Activated CD4-positive, alpha-beta T cell treated with anti-CD3 and anti-CD28 coated beads, Interleukin-2, amount 10 ng/mL, durations not matched to agents 24 days and 14 days (primary cell): ENCODE measurements at regions of chr19 and their contacts with region 1.

Region 1: DNA sequence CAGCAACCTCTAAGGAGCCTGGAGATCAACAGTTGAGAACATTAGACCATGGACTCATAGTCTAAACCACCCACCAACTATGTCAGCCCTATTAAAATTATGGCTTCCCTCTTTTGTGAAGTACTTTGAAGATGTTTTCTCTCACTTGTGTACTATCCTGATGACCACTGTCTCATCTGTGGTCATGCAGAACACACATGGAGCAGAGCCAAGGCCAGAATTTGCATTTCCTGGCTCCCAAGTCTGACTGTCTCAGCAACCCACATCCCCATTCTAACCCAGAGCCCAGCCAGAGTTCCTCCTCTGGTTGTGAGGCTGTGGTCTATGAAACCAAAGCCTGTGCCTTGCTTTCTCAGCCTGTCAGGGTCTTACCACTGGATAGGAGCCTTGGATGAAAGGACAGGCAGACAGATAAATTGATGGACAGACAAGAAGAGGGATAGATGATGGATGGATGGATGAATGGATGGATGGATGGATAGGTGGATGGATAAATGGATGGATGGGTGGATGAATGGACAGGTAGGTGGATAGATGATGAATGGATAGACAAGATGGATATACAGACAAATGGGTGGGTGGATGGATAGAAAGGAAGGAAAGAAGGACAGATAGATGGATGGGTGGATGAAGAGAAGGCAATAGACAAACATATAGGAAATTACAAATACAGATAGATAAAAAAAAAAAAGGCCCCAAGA is 35.4 kb downstream of the ZNF557 start:
- DNase-seq: no peak
- H3K4me3 Mint-ChIP-seq: no peak overlapping the region
- H3K27ac Mint-ChIP-seq: no peak overlapping the region
- H3K4me1 Mint-ChIP-seq: peaks cover 9% of the 10 kb centered on the region
- H3K27me3 Mint-ChIP-seq: no peaks in the 10 kb centered on the region

Region 2: DNA sequence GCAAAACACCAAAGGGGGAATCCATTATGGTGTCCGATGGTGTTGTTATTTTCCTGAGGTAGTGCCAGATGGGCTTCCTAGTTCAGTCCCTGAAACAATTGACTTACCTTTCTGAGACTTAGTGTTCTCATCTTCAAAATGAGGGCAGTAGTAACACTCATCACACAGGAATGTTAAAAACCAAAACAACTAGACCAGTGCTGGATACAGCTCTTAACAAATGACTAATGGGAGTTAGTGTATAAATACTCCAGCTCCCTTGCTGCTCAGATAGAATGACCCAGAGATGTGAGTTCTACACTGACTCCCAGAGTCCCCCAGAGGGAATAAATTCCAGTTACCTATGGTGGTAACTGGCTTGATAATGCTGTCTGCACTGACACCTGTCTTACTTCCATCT is 133.5 kb before region 1 on chr19:
- intact Hi-C with region 1: no loop called
- DNase-seq: no peak
- H3K4me3 Mint-ChIP-seq: no peak overlapping the region
- H3K27ac Mint-ChIP-seq: no peak overlapping the region
- H3K4me1 Mint-ChIP-seq: no peaks in the 10 kb centered on the region
- H3K27me3 Mint-ChIP-seq: no peaks in the 10 kb centered on the region

Region 3: DNA sequence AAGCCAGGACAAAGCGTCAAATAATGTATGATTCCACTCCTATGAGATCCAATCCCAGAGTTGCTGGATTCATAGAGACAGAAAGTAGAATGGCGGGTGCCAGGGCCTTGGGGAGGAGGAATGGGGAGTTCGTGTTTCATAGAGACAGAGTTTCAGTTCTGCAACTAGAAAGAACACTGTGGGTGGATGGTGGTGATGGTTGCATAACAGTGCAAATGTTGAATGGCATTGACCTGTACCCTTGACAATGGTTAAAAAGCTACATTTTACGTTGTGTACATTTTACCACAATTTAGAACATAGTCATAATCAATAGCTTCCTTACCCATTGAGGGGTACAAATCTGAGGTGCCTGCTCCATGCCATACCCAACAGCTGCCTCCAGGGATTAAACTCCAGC is 117.0 kb before region 1 on chr19:
- intact Hi-C with region 1: no loop called
- DNase-seq: no peak
- H3K4me3 Mint-ChIP-seq: no peak overlapping the region
- H3K27ac Mint-ChIP-seq: no peak overlapping the region
- H3K4me1 Mint-ChIP-seq: no peaks in the 10 kb centered on the region
- H3K27me3 Mint-ChIP-seq: no peaks in the 10 kb centered on the region

Region 4: DNA sequence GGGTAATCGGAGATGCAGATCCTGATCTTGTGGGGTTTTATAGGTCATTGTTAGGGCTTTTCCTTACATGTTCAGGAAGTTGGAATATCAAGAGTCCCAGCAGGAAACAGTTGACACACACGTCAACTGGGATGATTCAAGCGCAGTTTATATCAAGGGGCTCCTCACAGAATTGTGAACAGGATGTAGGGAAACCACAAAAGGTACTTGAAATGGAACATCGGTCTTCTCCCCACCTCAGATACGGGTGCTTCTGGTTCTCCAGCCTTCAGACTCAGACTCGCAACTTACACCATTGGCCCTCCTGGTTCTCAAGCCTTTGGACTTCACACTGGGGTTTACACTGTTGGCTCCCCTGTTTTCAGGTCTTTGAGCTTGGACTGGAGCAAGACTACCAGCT is 15.9 kb before region 1 on chr19:
- intact Hi-C with region 1: no loop called
- DNase-seq: no peak
- H3K4me3 Mint-ChIP-seq: no peak overlapping the region
- H3K27ac Mint-ChIP-seq: no peak overlapping the region
- H3K4me1 Mint-ChIP-seq: no peaks in the 10 kb centered on the region
- H3K27me3 Mint-ChIP-seq: no peaks in the 10 kb centered on the region

Region 5: DNA sequence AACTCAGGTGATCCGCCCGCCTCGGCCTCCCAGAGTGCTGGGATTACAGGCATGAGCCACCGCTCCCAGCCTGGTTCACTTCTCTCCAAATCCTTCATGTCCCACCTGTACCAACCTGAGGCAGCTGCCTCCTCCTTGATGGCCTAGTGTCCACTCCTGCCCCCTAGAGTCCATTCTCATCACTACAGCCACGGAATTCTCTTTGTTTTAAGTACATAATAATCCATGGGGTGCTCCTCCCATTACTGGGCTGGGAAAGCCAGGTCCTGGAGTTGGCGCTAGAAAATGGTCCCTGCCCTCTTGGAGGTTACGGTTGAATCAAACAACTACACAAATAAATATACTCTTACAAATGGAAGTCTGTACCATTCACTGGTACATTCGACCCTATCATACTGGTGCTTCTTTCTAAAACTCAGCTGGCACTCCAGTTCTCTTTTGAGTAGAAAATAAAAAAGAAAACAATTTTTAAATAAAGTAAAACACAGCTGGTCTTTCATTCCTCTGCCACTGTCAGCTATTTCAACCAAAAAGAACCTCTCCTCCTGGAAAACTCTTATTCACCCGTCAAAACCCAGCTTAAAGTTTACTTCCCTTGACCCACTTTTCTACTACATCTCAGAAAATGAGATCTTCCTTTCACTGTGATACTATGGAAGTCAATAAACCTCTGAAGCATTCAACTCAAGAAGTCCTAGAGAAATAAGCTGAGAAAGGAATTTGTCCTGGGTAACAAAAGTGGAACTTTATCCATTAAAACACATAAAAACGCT is 221.4 kb after region 1 on chr19:
- intact Hi-C with region 1: loop called (anchors 5 kb)
- DNase-seq: peak; percentile 83
- H3K4me3 Mint-ChIP-seq: no peak overlapping the region
- H3K27ac Mint-ChIP-seq: no peak overlapping the region
- H3K4me1 Mint-ChIP-seq: no peaks in the 10 kb centered on the region
- H3K27me3 Mint-ChIP-seq: peaks cover 2% of the 10 kb centered on the region

Region 6: GRCh38 chr19:7340959-7341837 is 236.3 kb after region 1 on chr19:
- intact Hi-C with region 1: loop called (anchors 1 kb)
- DNase-seq: peak; percentile 95
- H3K4me3 Mint-ChIP-seq: no peak overlapping the region
- H3K27ac Mint-ChIP-seq: no peak overlapping the region
- H3K4me1 Mint-ChIP-seq: peaks cover 47% of the 10 kb centered on the region
- H3K27me3 Mint-ChIP-seq: peaks cover 9% of the 10 kb centered on the region

Region 7: DNA sequence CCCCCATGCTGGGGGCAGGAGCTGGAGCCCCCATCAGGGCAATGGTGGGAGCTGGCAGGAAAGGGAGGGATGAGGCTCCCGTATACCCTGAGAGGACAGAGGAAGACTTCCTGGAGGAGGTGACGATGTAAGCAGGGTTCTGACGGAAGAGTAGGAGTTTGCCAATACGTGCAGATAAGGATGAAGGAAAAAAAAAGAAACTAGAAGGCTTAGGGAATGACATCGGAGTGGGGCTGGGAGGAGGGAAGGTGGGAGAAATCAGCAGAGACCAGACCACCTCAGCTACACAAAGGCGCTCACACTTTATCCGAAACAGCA is 276.1 kb after region 1 on chr19:
- intact Hi-C with region 1: loop called (anchors 2 kb)
- DNase-seq: no peak
- H3K4me3 Mint-ChIP-seq: no peak overlapping the region
- H3K27ac Mint-ChIP-seq: no peak overlapping the region
- H3K4me1 Mint-ChIP-seq: no peaks in the 10 kb centered on the region
- H3K27me3 Mint-ChIP-seq: no peaks in the 10 kb centered on the region